Ascending aorta (tissue), 2 donors: ENCODE measurements at regions of chr5 and their contacts with region 1.

Region 1: DNA sequence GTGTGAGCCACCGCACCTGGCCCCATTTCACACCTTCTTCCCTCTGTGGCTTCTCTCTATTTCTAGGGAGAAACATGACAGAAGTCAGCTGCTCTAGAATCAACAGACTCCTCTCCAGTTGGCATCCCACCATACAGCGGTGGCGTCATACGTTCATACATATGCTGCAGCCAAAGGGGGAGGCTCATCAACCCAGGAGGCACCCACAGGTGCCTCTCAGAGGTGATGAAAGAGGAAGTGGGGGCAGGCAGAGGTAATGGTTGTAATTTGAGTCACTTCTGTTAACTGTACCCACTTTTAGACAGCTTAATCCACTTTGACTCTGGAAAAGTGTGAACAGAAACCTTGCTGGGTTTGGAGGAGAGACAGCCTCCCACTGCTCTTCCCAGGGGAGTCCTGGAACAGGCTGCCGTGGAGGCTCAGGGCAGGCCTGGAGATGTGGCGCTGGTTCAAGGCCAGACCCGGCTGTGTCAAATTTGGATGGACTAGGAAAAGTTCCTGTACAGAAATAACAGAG is 47.3 kb upstream of the SUB1 start:
- DNase-seq: no peak
- H3K4me3 ChIP-seq: no peak overlapping the region
- H3K27ac ChIP-seq: peak overlapping the region; percentile 45 to 57
- H3K4me1 ChIP-seq: peaks cover 0 to 6% of the 10 kb centered on the region in 2 donors
- H3K27me3 ChIP-seq: no peaks in the 10 kb centered on the region
- CTCF ChIP-seq: no peak

Region 2: GRCh38 chr5:31382051-31382878 is 1155.8 kb before region 1 on chr5:
- intact Hi-C with region 1: no loop called
- DNase-seq: no peak
- H3K4me3 ChIP-seq: no peak overlapping the region
- H3K27ac ChIP-seq: no peak overlapping the region
- H3K4me1 ChIP-seq: no peaks in the 10 kb centered on the region
- H3K27me3 ChIP-seq: no peaks in the 10 kb centered on the region
- CTCF ChIP-seq: no peak

Region 3: GRCh38 chr5:31781772-31782171 is 756.3 kb before region 1 on chr5:
- intact Hi-C with region 1: no loop called
- DNase-seq: no peak
- H3K4me3 ChIP-seq: no peak overlapping the region
- H3K27ac ChIP-seq: no peak overlapping the region
- H3K4me1 ChIP-seq: no peaks in the 10 kb centered on the region
- H3K27me3 ChIP-seq: no peaks in the 10 kb centered on the region
- CTCF ChIP-seq: no peak

Region 4: GRCh38 chr5:31889001-31889561 is 649.0 kb before region 1 on chr5:
- intact Hi-C with region 1: no loop called
- DNase-seq: no peak
- H3K4me3 ChIP-seq: peak overlapping the region in 1 of 2 donors; percentile 33
- H3K27ac ChIP-seq: peak overlapping the region in 1 of 2 donors; percentile 5
- H3K4me1 ChIP-seq: peaks cover 0 to 4% of the 10 kb centered on the region in 2 donors
- H3K27me3 ChIP-seq: no peaks in the 10 kb centered on the region
- CTCF ChIP-seq: no peak

Region 5: DNA sequence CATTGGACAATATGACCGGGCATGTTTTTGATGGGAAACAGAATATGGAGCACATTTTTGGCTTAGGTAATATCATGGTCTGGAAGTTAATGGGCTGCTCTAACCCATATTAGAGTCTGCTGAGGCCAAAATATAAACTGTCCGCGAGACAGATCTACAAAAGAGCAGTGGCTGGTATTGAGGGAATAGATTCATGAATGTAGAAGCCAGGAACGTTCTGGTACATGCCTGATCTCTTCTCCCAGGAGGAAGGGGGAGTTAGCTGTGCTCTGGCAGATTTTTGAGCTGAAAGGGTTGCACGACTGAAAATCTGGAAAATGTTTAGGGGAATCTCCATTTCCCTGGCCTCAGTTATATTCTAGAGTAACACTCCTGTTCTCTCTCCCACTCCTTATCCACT is 50.7 kb before region 1 on chr5:
- intact Hi-C with region 1: no loop called
- DNase-seq: no peak
- H3K4me3 ChIP-seq: no peak overlapping the region
- H3K27ac ChIP-seq: no peak overlapping the region
- H3K4me1 ChIP-seq: peaks cover 0 to 5% of the 10 kb centered on the region in 2 donors
- H3K27me3 ChIP-seq: no peaks in the 10 kb centered on the region
- CTCF ChIP-seq: no peak

Region 6: GRCh38 chr5:32498484-32498883 is 39.6 kb before region 1 on chr5:
- intact Hi-C with region 1: loop called (anchors 5 kb)
- DNase-seq: no peak
- H3K4me3 ChIP-seq: no peak overlapping the region
- H3K27ac ChIP-seq: no peak overlapping the region
- H3K4me1 ChIP-seq: no peaks in the 10 kb centered on the region
- H3K27me3 ChIP-seq: no peaks in the 10 kb centered on the region
- CTCF ChIP-seq: no peak